Mammary epithelial cell (primary cell): ENCODE measurements at regions of chr10 and their contacts with region 1.

Region 1: DNA sequence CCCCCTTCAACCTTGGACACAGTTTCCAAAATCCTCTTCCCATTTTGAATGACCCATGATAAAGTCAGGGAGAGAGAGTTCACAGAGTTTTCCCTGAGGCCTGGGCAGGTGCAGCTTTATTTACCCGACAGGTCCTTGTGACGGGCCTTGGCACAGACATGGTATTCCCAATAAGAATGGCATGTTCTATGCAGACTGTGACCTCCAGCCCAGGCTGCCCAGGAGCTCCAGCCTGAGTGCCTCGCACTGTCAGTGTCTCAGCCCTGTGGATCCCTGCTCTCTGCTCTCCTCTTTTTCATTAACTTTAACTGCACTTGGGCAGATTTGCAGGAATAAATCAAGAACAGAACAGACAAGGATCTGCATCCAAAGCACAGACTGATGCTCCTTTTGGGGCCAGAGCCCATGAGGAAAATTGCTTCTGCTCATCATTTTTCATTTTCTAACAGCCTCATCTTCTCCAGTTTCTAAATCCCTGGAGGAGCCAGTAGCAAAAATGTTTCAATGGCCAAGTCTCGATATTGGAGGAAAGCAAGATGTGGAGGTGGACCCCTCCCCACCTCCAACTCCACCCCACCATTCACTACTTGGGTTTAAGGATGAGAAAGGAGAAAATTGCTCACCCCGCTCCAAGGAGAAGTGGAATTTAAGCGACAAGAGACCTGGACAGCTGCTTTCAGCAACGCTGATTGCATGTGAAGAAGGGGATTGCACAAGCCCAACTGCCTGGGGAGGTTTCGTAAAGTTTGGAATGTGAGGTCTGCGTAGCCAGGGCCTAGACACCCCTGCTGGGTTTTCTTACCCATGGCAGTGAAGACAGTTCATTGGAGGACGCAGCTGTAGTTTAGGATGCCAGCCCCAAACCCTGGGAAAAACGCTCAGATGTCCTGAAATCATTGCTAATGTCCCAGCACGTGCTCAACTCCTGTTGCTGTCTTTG is 225.9 kb downstream of the WDR11 start:
- DNase-seq: peak; percentile 78
- H3K4me3 ChIP-seq: no peak overlapping the region
- H3K27ac ChIP-seq: peak overlapping the region; percentile 95
- H3K4me1 ChIP-seq: peaks cover 38% of the 10 kb centered on the region
- H3K27me3 ChIP-seq: no peaks in the 10 kb centered on the region
- CTCF ChIP-seq: peak in 1 of 2 donors; percentile 3

Region 2: DNA sequence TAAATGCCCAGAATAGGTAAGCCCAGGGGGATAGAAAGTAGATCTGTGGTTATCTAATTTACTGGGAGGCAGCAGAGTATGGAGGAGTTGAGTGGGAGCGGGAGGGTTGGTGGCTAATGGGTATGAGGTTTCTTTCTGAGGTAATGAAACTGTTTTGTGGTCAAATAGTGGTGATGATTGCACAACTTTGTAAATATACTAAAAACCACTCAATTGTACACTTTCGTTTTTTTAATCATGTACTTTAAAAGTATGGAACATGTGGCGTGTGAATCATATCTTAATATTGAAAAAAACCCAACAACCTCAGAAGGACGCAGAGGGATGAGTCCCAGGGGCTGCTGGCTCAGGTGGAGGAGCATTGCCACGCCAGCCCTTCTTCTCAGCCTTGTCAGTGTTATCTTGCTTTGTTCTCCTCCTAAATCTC is 107.8 kb before region 1 on chr10:
- CTCF ChIA-PET with region 1: no interaction called
- dilution Hi-C with region 1: no loop called
- in situ Hi-C with region 1: no loop called
- intact Hi-C with region 1: loop called (anchors 5 kb)
- DNase-seq: peak; percentile 88
- H3K4me3 ChIP-seq: no peak overlapping the region
- H3K27ac ChIP-seq: no peak overlapping the region
- H3K4me1 ChIP-seq: peaks cover 14% of the 10 kb centered on the region
- H3K27me3 ChIP-seq: peaks cover 32% of the 10 kb centered on the region
- CTCF ChIP-seq: no peak

Region 3: GRCh38 chr10:120999868-121000267 is 77.2 kb before region 1 on chr10:
- CTCF ChIA-PET with region 1: no interaction called
- dilution Hi-C with region 1: no loop called
- in situ Hi-C with region 1: no loop called
- intact Hi-C with region 1: loop called (anchors 5 kb)
- DNase-seq: no peak
- H3K4me3 ChIP-seq: no peak overlapping the region
- H3K27ac ChIP-seq: no peak overlapping the region
- H3K4me1 ChIP-seq: peaks cover 7% of the 10 kb centered on the region
- H3K27me3 ChIP-seq: peaks cover 7% of the 10 kb centered on the region
- CTCF ChIP-seq: peak; percentile 12 to 22

Region 4: DNA sequence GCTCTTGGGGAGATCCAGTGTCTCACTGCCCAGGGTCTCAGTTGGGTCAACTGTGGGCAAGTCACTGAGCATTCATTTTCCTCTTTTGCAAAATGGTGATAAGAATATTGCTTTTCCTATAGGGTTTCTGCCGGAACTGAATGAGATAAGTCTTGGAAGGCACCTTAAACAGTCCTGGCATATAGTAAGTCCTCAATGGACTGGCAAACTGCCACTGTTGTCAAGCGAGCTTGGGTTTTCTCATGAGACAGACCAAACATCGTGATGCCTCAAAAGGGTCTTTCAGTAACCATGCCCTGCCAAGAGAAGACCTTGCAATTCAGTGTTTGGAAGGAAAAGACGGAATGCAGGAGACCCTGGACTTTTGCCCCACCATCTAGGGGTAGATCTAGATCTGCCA is 25.7 kb after region 1 on chr10:
- CTCF ChIA-PET with region 1: no interaction called
- dilution Hi-C with region 1: no loop called
- in situ Hi-C with region 1: no loop called
- intact Hi-C with region 1: no loop called
- DNase-seq: no peak
- H3K4me3 ChIP-seq: no peak overlapping the region
- H3K27ac ChIP-seq: no peak overlapping the region
- H3K4me1 ChIP-seq: peaks cover 11% of the 10 kb centered on the region
- H3K27me3 ChIP-seq: no peaks in the 10 kb centered on the region
- CTCF ChIP-seq: no peak

Region 5: DNA sequence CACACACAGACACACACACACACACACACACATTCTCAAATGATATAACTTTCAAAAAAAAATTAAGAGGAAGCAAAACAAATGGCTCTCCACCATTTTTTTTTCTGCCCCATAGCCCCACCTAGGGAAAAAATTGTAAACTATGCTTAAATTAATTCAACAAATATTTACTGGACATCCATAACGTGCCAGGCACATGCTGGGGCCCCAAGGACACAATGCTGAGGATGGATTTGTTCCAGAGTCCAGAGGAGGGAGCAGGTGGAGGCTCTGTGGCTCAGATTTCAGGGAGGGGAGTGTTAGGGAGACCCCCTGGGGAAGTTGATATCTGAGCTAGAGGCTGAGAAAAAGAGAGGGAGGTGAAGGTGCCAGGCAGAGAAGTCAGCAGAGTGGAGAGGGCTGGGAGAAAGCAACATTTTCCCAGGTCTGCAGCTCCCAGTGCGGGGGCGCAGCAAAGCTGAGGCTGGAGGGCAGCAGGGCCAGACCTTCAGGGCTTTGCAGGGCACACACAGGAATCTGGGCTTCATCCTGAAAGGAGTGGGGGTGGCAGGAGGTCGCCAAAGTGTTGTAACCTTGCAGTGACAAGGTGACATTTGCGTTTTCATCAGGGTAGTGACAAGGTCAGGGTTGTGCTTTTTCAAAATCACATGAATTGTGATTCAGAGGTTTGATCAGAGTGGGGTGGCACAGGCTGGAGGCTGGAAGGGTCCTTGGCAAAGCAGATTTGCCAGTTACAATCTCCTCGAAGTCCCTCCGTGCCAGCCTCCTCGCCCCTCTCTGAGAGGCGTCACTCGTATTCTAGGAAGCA is 35.7 kb after region 1 on chr10:
- CTCF ChIA-PET with region 1: no interaction called
- dilution Hi-C with region 1: no loop called
- in situ Hi-C with region 1: no loop called
- intact Hi-C with region 1: loop called (anchors 1 kb)
- DNase-seq: peak; percentile 8
- H3K4me3 ChIP-seq: no peak overlapping the region
- H3K27ac ChIP-seq: peak overlapping the region; percentile 38
- H3K4me1 ChIP-seq: peaks cover 21% of the 10 kb centered on the region
- H3K27me3 ChIP-seq: no peaks in the 10 kb centered on the region
- CTCF ChIP-seq: no peak

Region 6: GRCh38 chr10:121157998-121158397 is 81.0 kb after region 1 on chr10:
- CTCF ChIA-PET with region 1: no interaction called
- dilution Hi-C with region 1: no loop called
- in situ Hi-C with region 1: no loop called
- intact Hi-C with region 1: loop called (anchors 2 kb)
- DNase-seq: peak; percentile 54
- H3K4me3 ChIP-seq: no peak overlapping the region
- H3K27ac ChIP-seq: peak overlapping the region; percentile 100
- H3K4me1 ChIP-seq: peaks cover 49% of the 10 kb centered on the region
- H3K27me3 ChIP-seq: no peaks in the 10 kb centered on the region
- CTCF ChIP-seq: no peak

Region 7: DNA sequence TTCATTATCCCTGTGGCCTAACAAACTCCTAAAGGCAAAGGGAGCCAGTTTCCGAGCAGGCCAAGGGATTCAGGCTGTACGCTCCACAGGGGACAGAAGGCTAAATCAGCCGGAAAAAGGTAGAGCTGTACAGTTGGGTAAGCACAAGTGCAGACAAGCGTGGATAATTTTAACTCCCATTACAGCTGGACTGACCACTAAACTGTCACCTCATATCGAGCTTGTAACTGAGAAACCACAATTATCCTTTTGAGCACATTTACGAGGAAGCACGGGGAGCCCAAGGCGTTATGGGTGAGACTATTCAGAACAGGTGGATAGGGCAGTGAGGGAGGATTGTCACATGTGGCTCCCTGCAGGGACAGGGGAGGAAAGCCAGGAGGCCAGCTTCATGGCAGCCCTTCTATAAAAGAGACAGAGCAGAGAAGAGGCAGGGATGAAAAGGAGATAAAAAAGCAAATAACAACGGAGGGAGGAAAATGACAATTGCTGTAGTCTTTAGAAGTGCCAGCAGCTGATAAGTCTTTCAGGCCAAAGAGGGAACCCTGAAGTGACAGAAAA is 233.2 kb after region 1 on chr10:
- CTCF ChIA-PET with region 1: no interaction called
- dilution Hi-C with region 1: no loop called
- in situ Hi-C with region 1: no loop called
- intact Hi-C with region 1: loop called (anchors 5 kb)
- DNase-seq: peak; percentile 65
- H3K4me3 ChIP-seq: no peak overlapping the region
- H3K27ac ChIP-seq: peak overlapping the region; percentile 81
- H3K4me1 ChIP-seq: peaks cover 64% of the 10 kb centered on the region
- H3K27me3 ChIP-seq: no peaks in the 10 kb centered on the region
- CTCF ChIP-seq: no peak

Region 8: DNA sequence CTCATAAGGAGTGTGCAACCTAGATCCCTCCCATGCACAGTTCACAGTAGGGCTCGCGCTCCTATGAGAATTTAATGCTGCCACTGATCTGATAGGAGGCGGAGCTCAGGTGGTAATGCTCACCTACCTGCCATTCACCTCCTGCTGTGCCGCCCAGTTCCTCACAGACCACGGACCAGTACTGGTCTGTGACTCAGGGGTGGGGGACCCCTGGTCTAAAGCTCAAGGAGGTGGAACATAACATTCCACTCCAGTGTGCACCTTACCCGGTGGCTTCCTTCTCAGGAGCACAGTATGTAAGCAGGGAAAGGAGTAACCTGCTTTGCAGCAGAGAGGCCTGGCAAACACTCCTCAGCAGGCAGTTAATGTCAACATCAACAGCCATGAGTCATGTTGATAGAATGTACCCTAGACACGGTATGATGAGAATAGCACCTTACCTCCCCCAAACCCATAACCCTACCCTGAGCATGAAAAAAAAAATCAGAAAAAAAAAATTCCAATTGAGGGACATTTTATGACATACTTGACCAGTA is 247.7 kb after region 1 on chr10:
- CTCF ChIA-PET with region 1: interaction called, 5 read pairs
- dilution Hi-C with region 1: no loop called
- in situ Hi-C with region 1: no loop called
- intact Hi-C with region 1: loop called (anchors 5 kb)
- DNase-seq: peak; percentile 70
- H3K4me3 ChIP-seq: no peak overlapping the region
- H3K27ac ChIP-seq: peak overlapping the region; percentile 81
- H3K4me1 ChIP-seq: peaks cover 50% of the 10 kb centered on the region
- H3K27me3 ChIP-seq: no peaks in the 10 kb centered on the region
- CTCF ChIP-seq: no peak

Region 9: DNA sequence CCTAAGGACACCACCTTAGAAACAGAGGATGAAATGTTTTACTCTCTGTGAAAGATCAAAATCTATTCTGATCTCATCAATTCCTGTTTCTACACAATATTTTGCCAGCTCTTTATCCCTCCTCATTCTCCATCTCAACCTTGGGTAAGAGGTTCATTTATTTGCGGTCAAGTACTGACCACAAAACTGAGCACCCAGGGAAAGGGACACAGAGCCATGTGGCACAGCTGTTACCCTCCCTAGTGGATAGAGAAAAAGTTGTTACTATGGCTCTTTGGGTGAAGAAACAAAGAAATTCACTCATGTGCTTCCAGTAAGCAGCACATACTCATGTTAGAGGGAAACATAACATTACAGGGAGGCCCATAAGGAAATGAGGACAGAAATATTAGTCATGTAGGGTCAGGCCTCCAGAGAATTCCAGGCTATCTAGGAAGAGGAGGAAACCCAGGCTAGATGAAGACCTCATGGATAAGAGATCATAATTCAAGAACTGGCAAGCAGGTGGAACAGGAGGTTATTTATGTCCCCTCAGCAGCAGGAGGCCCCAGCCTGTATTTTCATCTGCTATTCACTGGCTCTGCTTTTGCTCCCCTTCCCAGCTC is 736.3 kb after region 1 on chr10:
- CTCF ChIA-PET with region 1: no interaction called
- dilution Hi-C with region 1: no loop called
- in situ Hi-C with region 1: no loop called
- intact Hi-C with region 1: no loop called
- DNase-seq: no peak
- H3K4me3 ChIP-seq: no peak overlapping the region
- H3K27ac ChIP-seq: no peak overlapping the region
- H3K4me1 ChIP-seq: no peaks in the 10 kb centered on the region
- H3K27me3 ChIP-seq: no peaks in the 10 kb centered on the region
- CTCF ChIP-seq: no peak